A549 (cell line): ENCODE measurements at regions of chr18 and their contacts with region 1.

Region 1: GRCh38 chr18:32470713-32471633 is at the start of gene GAREM1:
- DNase-seq: peak; percentile 56 to 92
- ATAC-seq: peak; percentile 90 to 95
- H3K4me3 ChIP-seq: peak within 1 kb of the TSS; percentile 89
- H3K27ac ChIP-seq: peak within 1 kb of the TSS; percentile 82 to 93
- H3K4me1 ChIP-seq: peaks cover 15% of the 10 kb centered on the region; the same call in 1 of the 3 replicates
- CTCF ChIP-seq: peak; percentile 46
- EP300 ChIP-seq: no peak
- POLR2A ChIP-seq: peak; percentile 73
- RAD21 ChIP-seq: peak; percentile 34 to 87
- polyA plus RNA-seq, gene GAREM1: 5.0 and 6.5 TPM in 2 replicates

Region 2: GRCh38 chr18:32158108-32158624 is 312.8 kb before region 1 on chr18:
- CTCF ChIA-PET with region 1: interaction called, 12 read pairs
- POLR2A ChIA-PET with region 1: no interaction called
- DNase-seq: peak; percentile 40 to 81
- ATAC-seq: peak; percentile 99
- H3K4me3 ChIP-seq: no peak overlapping the region
- H3K27ac ChIP-seq: no peak overlapping the region
- H3K4me1 ChIP-seq: no peaks in the 10 kb centered on the region
- CTCF ChIP-seq: peak; percentile 72
- EP300 ChIP-seq: no peak
- POLR2A ChIP-seq: no peak
- RAD21 ChIP-seq: peak; percentile 84 to 86

Region 3: DNA sequence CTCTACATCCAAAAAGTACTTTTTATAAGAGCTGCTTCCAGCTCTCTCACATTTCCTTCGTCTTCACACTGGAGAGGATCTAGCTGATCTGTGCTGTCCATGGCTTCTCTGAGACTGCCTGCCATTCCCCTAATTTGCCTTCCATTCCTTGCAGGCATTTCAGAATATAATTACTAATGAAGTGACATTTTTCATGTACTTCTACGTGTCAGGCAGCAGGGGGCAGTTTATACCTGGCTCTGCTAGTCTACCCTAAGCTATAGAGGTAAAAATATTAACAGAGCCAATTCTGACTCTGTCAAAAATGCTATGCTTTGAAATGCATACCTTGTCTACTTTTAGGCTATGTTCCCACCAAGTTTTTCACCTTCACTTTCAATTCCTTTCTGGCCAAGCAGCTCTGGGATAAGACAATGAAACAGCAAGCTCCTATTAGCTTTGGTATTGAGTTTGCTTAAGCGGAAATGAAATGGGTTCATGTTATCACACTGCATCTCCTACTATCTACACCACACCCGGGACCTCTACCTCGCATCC is 199.2 kb before region 1 on chr18:
- CTCF ChIA-PET with region 1: interaction called, 89 read pairs
- POLR2A ChIA-PET with region 1: interaction called, 10 read pairs
- DNase-seq: peak; percentile 37 to 40
- ATAC-seq: peak; percentile 59 to 78; a peak in 4 of 6 replicates
- H3K4me3 ChIP-seq: no peak overlapping the region
- H3K27ac ChIP-seq: no peak overlapping the region
- H3K4me1 ChIP-seq: no peaks in the 10 kb centered on the region
- CTCF ChIP-seq: peak; percentile 66
- EP300 ChIP-seq: no peak
- POLR2A ChIP-seq: no peak
- RAD21 ChIP-seq: peak; percentile 76 to 77

Region 4: GRCh38 chr18:32284284-32284683 is 186.7 kb before region 1 on chr18:
- CTCF ChIA-PET with region 1: interaction called, 34 read pairs
- POLR2A ChIA-PET with region 1: interaction called, 19 read pairs
- DNase-seq: no peak
- ATAC-seq: no peak
- H3K4me3 ChIP-seq: no peak overlapping the region
- H3K27ac ChIP-seq: no peak overlapping the region
- H3K4me1 ChIP-seq: peaks cover 10% of the 10 kb centered on the region
- CTCF ChIP-seq: no peak
- EP300 ChIP-seq: no peak
- POLR2A ChIP-seq: no peak
- RAD21 ChIP-seq: no peak

Region 5: GRCh38 chr18:32289483-32290075 is 181.4 kb before region 1 on chr18:
- CTCF ChIA-PET with region 1: interaction called, 34 read pairs
- POLR2A ChIA-PET with region 1: interaction called, 19 read pairs
- DNase-seq: peak; percentile 31 to 58
- ATAC-seq: peak; percentile 81 to 90
- H3K4me3 ChIP-seq: no peak overlapping the region
- H3K27ac ChIP-seq: no peak overlapping the region
- H3K4me1 ChIP-seq: no peaks in the 10 kb centered on the region
- CTCF ChIP-seq: peak; percentile 65
- EP300 ChIP-seq: no peak
- POLR2A ChIP-seq: no peak
- RAD21 ChIP-seq: peak; percentile 57 to 66

Region 6: GRCh38 chr18:32317651-32318050 is 153.3 kb before region 1 on chr18:
- CTCF ChIA-PET with region 1: interaction called, 10 read pairs
- POLR2A ChIA-PET with region 1: interaction called, 3 read pairs
- DNase-seq: no peak
- ATAC-seq: no peak
- H3K4me3 ChIP-seq: no peak overlapping the region
- H3K27ac ChIP-seq: peak overlapping the region; percentile 48 to 70; a peak in 5 of 6 replicates
- H3K4me1 ChIP-seq: peaks cover 17% of the 10 kb centered on the region
- CTCF ChIP-seq: no peak
- EP300 ChIP-seq: no peak
- POLR2A ChIP-seq: no peak
- RAD21 ChIP-seq: no peak

Region 7: GRCh38 chr18:32386476-32386875 is 84.5 kb before region 1 on chr18:
- CTCF ChIA-PET with region 1: interaction called, 10 read pairs
- POLR2A ChIA-PET with region 1: interaction called, 3 read pairs
- DNase-seq: no peak
- ATAC-seq: no peak
- H3K4me3 ChIP-seq: no peak overlapping the region
- H3K27ac ChIP-seq: no peak overlapping the region
- H3K4me1 ChIP-seq: peaks cover 17% of the 10 kb centered on the region
- CTCF ChIP-seq: no peak
- EP300 ChIP-seq: no peak
- POLR2A ChIP-seq: no peak
- RAD21 ChIP-seq: no peak

Region 8: GRCh38 chr18:32401621-32402020 is 69.4 kb before region 1 on chr18:
- CTCF ChIA-PET with region 1: no interaction called
- POLR2A ChIA-PET with region 1: no interaction called
- DNase-seq: no peak
- ATAC-seq: no peak
- H3K4me3 ChIP-seq: no peak overlapping the region
- H3K27ac ChIP-seq: no peak overlapping the region
- H3K4me1 ChIP-seq: no peaks in the 10 kb centered on the region
- CTCF ChIP-seq: no peak
- EP300 ChIP-seq: no peak
- POLR2A ChIP-seq: no peak
- RAD21 ChIP-seq: no peak